IMR-90 (cell line): ENCODE measurements at regions of chr10 and their contacts with region 1.

Region 1: GRCh38 chr10:58299580-58299979 is 30.6 kb downstream of the CISD1 start:
- DNase-seq: peak; percentile 57
- ATAC-seq: peak; percentile 93
- H3K4me3 ChIP-seq: no peak overlapping the region
- H3K27ac ChIP-seq: no peak overlapping the region
- H3K4me1 ChIP-seq: no peaks in the 10 kb centered on the region
- H3K27me3 ChIP-seq: peaks cover 2% of the 10 kb centered on the region; the same call in 1 of the 2 replicates
- CTCF ChIP-seq: peak; percentile 72
- POLR2A ChIP-seq: no peak
- RAD21 ChIP-seq: peak; percentile 69

Region 2: DNA sequence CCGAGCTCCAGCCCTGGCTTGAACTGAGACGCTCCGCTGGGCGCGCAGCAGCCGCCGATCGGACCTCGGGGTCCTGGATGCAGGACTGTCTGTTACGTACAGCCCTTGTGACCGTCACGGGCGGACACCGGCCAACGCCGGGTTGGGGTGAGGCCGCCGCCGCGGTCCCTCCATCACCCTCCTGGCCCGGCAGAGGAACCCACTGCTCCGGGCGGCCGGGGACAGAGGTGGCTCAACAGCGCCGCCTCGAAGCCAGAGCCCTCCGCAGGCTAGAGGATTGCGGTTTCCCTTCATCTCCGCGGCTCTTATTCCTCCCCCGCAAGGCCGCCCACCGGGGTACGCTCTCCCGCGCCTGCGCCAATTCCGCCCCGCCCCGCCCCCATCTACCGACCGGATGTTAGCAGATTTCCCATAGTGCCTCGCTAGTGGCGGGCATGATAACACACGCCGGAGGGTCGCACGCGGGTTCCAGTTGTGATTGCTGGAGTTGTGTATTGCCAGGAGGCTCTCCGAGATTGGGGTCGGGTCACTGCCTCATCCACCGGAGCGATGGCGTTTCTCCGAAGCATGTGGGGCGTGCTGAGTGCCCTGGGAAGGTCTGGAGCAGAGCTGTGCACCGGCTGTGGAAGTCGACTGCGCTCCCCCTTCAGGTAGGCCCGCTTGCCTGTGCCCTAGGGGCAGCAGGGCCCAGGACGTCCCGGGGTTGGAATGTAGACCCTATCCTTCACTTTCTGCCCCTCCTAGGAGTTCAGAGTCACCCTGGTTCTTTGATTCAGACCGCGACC is 85.6 kb after region 1 on chr10 and contains the start of gene TFAM:
- CTCF ChIA-PET with region 1: no interaction called
- POLR2A ChIA-PET with region 1: no interaction called
- dilution Hi-C with region 1: no loop called
- in situ Hi-C with region 1: no loop called
- intact Hi-C with region 1: loop called (anchors 2 kb)
- DNase-seq: peak; percentile 85
- ATAC-seq: peak; percentile 96
- H3K4me3 ChIP-seq: peak within 1 kb of the TSS; percentile 83
- H3K27ac ChIP-seq: peak within 1 kb of the TSS; percentile 78
- H3K4me1 ChIP-seq: no peaks in the 10 kb centered on the region; the same call in 1 of the 2 replicates
- H3K27me3 ChIP-seq: no peaks in the 10 kb centered on the region
- CTCF ChIP-seq: peak; percentile 57
- POLR2A ChIP-seq: peak; percentile 78
- RAD21 ChIP-seq: peak; percentile 53
- total RNA-seq, gene TFAM: 16.7 and 26.1 TPM in 2 replicates

Region 3: DNA sequence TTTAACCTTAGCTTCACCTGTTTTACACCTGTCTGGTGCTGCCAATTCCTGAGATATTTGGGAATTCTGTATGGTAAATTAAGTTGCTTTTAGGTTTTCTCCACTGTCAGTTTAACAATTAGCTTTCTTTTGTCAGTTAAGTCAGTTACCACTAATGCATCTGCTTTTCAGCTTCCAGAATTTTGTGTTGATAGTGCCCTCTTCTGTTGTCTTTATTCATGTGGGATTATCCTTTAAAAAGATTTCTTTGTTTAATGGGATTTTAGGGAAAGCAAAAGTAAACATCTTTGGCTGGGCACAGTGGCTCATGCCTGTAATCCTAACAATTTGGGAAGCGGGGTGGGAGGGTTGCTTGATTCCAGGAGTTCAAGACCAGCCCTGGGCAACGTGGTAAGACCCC is 93.7 kb after region 1 on chr10:
- CTCF ChIA-PET with region 1: interaction called, 3 read pairs
- POLR2A ChIA-PET with region 1: no interaction called
- dilution Hi-C with region 1: no loop called
- in situ Hi-C with region 1: no loop called
- intact Hi-C with region 1: loop called (anchors 1 kb)
- DNase-seq: peak; percentile 8
- ATAC-seq: no peak
- H3K4me3 ChIP-seq: no peak overlapping the region
- H3K27ac ChIP-seq: no peak overlapping the region
- H3K4me1 ChIP-seq: peaks cover 2% of the 10 kb centered on the region; the same call in 1 of the 2 replicates
- H3K27me3 ChIP-seq: no peaks in the 10 kb centered on the region
- CTCF ChIP-seq: peak; percentile 32
- POLR2A ChIP-seq: no peak
- RAD21 ChIP-seq: peak; percentile 13; the same call in 1 of the 2 replicates

Region 4: GRCh38 chr10:58414270-58415041 is 114.9 kb after region 1 on chr10:
- CTCF ChIA-PET with region 1: no interaction called
- POLR2A ChIA-PET with region 1: no interaction called
- dilution Hi-C with region 1: no loop called
- in situ Hi-C with region 1: no loop called
- intact Hi-C with region 1: no loop called
- DNase-seq: peak; percentile 80
- ATAC-seq: peak; percentile 91
- H3K4me3 ChIP-seq: no peak overlapping the region
- H3K27ac ChIP-seq: no peak overlapping the region
- H3K4me1 ChIP-seq: peaks cover 5% of the 10 kb centered on the region
- H3K27me3 ChIP-seq: no peaks in the 10 kb centered on the region
- CTCF ChIP-seq: peak; percentile 78
- POLR2A ChIP-seq: 0 out of 2 replicates have a peak, but pooled peaks have one; percentile 32
- RAD21 ChIP-seq: peak; percentile 93

Region 5: GRCh38 chr10:58622246-58622645 is 322.7 kb after region 1 on chr10:
- CTCF ChIA-PET with region 1: no interaction called
- POLR2A ChIA-PET with region 1: no interaction called
- dilution Hi-C with region 1: no loop called
- in situ Hi-C with region 1: no loop called
- intact Hi-C with region 1: no loop called
- DNase-seq: peak; percentile 68
- ATAC-seq: no peak
- H3K4me3 ChIP-seq: no peak overlapping the region
- H3K27ac ChIP-seq: no peak overlapping the region
- H3K4me1 ChIP-seq: peaks cover 2% of the 10 kb centered on the region; the same call in 1 of the 2 replicates
- H3K27me3 ChIP-seq: no peaks in the 10 kb centered on the region
- CTCF ChIP-seq: no peak
- POLR2A ChIP-seq: no peak
- RAD21 ChIP-seq: no peak